Naive thymus-derived CD8-positive, alpha-beta T cell (primary cell): ENCODE measurements at regions of chr5 and their contacts with region 1.

Region 1: GRCh38 chr5:154189819-154190594 is 526 bp upstream of the GALNT10 start:
- DNase-seq: peak; percentile 67 to 86 (median 80)
- ATAC-seq: peak; percentile 75 to 81
- H3K4me3 Mint-ChIP-seq: peak overlapping the region; percentile 77 to 93 (median 88)
- H3K27ac Mint-ChIP-seq: peak overlapping the region; percentile 56 to 93 (median 78)
- H3K4me1 Mint-ChIP-seq: peaks cover 27 to 51% (median 45%) of the 10 kb centered on the region in 4 donors
- H3K27me3 Mint-ChIP-seq: no peaks in the 10 kb centered on the region

Region 2: GRCh38 chr5:154038707-154039457 is 151.1 kb before region 1 on chr5 and contains the starts of genes FAM114A2 and MFAP3:
- POLR2A ChIA-PET with region 1: interaction called, 35 read pairs
- DNase-seq: peak; percentile 76 to 93 (median 86)
- ATAC-seq: peak; percentile 97 to 98
- H3K4me3 Mint-ChIP-seq: peak within 1 kb of the TSS; percentile 92 to 99 (median 98)
- H3K27ac Mint-ChIP-seq: peak within 1 kb of the TSS; percentile 97 to 99 (median 98)
- H3K4me1 Mint-ChIP-seq: peaks cover 35 to 73% (median 64%) of the 10 kb centered on the region in 4 donors
- H3K27me3 Mint-ChIP-seq: no peaks in the 10 kb centered on the region
- polyA plus RNA-seq, gene FAM114A2: 14.0 to 21.9 (median 19.6) TPM
- polyA plus RNA-seq, gene MFAP3: 4.0 to 7.5 (median 5.4) TPM

Region 3: DNA sequence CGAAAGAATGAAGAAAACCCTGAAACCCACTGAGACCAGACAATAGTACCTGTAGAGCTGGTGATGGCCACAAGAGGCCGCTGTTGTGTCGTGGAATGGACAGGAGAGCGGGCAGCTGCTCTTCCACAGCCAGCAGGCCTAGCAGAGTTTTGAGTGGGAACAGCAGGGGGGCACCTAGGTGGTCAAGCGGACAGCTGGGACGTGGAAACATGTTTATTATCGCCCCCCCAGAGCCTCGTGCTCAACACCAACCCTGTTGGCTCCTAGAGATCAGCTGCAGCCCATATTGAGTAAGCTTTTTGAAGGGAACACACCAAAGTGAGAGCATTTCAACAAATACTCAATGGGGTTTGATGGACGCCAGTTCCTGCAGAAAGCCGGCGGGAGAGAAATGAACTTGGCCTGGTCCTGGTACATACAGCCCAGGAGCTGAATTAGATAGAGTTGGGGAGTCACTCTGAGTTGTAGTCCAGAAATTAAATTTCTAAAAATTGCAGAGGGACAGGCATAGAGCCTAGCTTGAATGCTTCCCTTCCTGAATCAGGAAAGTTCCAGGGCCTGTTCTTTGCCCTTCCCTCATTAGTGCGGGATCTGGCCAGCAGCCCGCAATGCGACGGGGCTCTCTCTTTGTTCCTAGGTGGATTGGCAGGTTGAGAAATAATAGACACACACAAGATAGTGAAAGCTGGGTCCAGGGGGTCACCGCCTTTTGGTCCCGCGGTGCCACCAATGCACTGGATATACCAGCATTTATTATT is 117.4 kb before region 1 on chr5:
- POLR2A ChIA-PET with region 1: interaction called, 10 read pairs
- DNase-seq: peak; percentile 58 to 89 (median 78)
- ATAC-seq: peak; percentile 90 to 96
- H3K4me3 Mint-ChIP-seq: peak overlapping the region in 1 of 10 donors; percentile 53
- H3K27ac Mint-ChIP-seq: peak overlapping the region in 5 of 10 donors; percentile 10 to 78 (median 59)
- H3K4me1 Mint-ChIP-seq: peaks cover 5 to 36% (median 23%) of the 10 kb centered on the region in 4 donors
- H3K27me3 Mint-ChIP-seq: peaks cover 0 to 23% (median 8%) of the 10 kb centered on the region in 5 donors

Region 4: DNA sequence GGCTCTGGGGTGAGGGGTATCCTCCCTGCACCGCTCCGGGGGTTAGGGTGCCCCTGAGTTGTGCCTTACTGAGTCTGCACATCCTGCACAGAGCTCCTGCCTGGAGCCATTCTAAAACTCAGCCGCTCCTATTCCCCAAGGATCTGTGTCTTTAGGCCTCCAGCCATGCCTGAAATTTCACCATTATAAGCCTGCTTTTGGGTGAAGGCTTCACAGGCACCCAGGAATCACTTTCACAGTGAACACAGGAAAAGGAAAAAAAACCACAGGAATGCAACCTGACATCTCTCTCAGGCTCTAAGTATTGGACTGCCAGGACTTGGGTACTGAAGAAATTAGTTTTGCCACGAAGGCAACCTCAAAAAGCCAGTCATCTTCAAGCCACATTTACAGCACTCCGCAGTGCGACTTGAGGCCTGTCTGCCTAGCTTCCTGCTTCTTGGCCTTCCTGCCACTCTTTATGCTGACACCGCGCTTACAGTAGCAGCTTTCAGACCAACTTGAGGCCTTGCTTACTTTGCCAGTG is 31.4 kb after region 1 on chr5:
- POLR2A ChIA-PET with region 1: interaction called, 12 read pairs
- DNase-seq: peak; percentile 17 to 66 (median 48)
- ATAC-seq: peak; percentile 97 to 99
- H3K4me3 Mint-ChIP-seq: peak overlapping the region in 4 of 10 donors; percentile 20 to 54 (median 36)
- H3K27ac Mint-ChIP-seq: peak overlapping the region; percentile 72 to 97 (median 91)
- H3K4me1 Mint-ChIP-seq: peaks cover 14 to 67% (median 48%) of the 10 kb centered on the region in 4 donors
- H3K27me3 Mint-ChIP-seq: no peaks in the 10 kb centered on the region